CD8-positive, alpha-beta T cell (primary cell): ENCODE measurements at regions of chr10 and their contacts with region 1.

Region 1: GRCh38 chr10:87867453-87867852 is 4.0 kb downstream of the PTEN start:
- DNase-seq: no peak
- ATAC-seq: no peak
- H3K4me3 ChIP-seq: peak overlapping the region in 1 of 2 experiments; percentile 62
- H3K4me3 Mint-ChIP-seq: peak overlapping the region; percentile 99
- H3K27ac ChIP-seq: no peak overlapping the region
- H3K27ac Mint-ChIP-seq: no peak overlapping the region
- H3K4me1 ChIP-seq: peaks cover 21% of the 10 kb centered on the region
- H3K4me1 Mint-ChIP-seq: peaks cover 59% of the 10 kb centered on the region
- H3K27me3 ChIP-seq: no peaks in the 10 kb centered on the region
- H3K27me3 Mint-ChIP-seq: no peaks in the 10 kb centered on the region
- CTCF ChIP-seq: no peak

Region 2: GRCh38 chr10:87878664-87879459 is 11.4 kb after region 1 on chr10:
- CTCF ChIA-PET with region 1: interaction called, 8 read pairs
- POLR2A ChIA-PET with region 1: interaction called, 12 read pairs
- intact Hi-C with region 1: loop called in 1 of 2 experiments (anchors 1 kb)
- DNase-seq: no peak
- ATAC-seq: no peak
- H3K4me3 ChIP-seq: no peak overlapping the region
- H3K4me3 Mint-ChIP-seq: peak overlapping the region; percentile 9
- H3K27ac ChIP-seq: no peak overlapping the region
- H3K27ac Mint-ChIP-seq: peak overlapping the region; percentile 72
- H3K4me1 ChIP-seq: peaks cover 31% of the 10 kb centered on the region
- H3K4me1 Mint-ChIP-seq: peaks cover 64% of the 10 kb centered on the region
- H3K27me3 ChIP-seq: no peaks in the 10 kb centered on the region
- H3K27me3 Mint-ChIP-seq: no peaks in the 10 kb centered on the region
- CTCF ChIP-seq: no peak

Region 3: GRCh38 chr10:88125766-88126165 is 258.3 kb after region 1 on chr10:
- CTCF ChIA-PET with region 1: no interaction called
- POLR2A ChIA-PET with region 1: no interaction called
- intact Hi-C with region 1: no loop called
- DNase-seq: no peak
- ATAC-seq: no peak
- H3K4me3 ChIP-seq: no peak overlapping the region
- H3K4me3 Mint-ChIP-seq: no peak overlapping the region
- H3K27ac ChIP-seq: no peak overlapping the region
- H3K27ac Mint-ChIP-seq: no peak overlapping the region
- H3K4me1 ChIP-seq: peaks cover 2% of the 10 kb centered on the region
- H3K4me1 Mint-ChIP-seq: peaks cover 2% of the 10 kb centered on the region
- H3K27me3 ChIP-seq: no peaks in the 10 kb centered on the region
- H3K27me3 Mint-ChIP-seq: no peaks in the 10 kb centered on the region
- CTCF ChIP-seq: no peak